ENCODE measurements at regions of chr17 and their contacts with region 1.

Region 1: DNA sequence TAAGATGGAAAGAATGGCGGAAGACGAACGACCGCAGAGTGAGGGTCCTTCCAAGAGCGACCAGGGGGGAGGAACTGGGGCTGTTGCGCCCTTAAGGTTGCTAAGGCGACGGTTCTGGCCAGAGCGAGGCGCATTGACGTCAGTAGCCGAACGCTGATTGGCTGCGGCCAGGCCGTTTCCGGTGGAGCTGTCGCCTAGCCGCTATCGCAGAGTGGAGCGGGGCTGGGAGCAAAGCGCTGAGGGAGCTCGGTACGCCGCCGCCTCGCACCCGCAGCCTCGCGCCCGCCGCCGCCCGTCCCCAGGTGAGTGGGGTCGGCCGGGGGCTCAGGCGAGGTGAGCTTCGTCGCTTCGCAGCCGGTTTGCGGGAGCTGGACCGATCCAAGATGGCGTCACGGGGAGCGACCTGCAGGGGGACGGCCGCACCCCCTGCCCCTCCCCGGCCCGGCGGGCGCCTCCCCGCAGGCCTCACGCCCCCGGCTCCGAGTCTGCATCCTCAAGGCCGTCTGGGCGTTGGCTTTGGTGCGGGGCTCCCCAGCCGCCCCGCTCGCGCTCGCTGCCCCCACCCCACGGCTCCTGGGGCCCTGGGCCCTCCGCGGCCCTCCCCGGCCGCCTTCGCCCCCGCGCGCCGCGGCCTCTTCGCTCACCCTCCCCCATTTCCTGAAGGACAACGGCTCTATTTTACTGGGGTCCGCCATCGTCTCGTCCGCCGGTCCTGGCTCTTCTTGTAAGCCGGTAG is at the start of gene PRKAR1A:
- DNase-seq: peak; percentile 97
- ATAC-seq: peak; percentile 89
- H3K4me3 Mint-ChIP-seq: peak within 1 kb of the TSS; percentile 98
- H3K27ac Mint-ChIP-seq: peak within 1 kb of the TSS; percentile 97
- H3K4me1 Mint-ChIP-seq: peaks cover 64% of the 10 kb centered on the region
- H3K27me3 Mint-ChIP-seq: no peaks in the 10 kb centered on the region
- total RNA-seq, gene PRKAR1A: 215 to 293 TPM

Region 2: DNA sequence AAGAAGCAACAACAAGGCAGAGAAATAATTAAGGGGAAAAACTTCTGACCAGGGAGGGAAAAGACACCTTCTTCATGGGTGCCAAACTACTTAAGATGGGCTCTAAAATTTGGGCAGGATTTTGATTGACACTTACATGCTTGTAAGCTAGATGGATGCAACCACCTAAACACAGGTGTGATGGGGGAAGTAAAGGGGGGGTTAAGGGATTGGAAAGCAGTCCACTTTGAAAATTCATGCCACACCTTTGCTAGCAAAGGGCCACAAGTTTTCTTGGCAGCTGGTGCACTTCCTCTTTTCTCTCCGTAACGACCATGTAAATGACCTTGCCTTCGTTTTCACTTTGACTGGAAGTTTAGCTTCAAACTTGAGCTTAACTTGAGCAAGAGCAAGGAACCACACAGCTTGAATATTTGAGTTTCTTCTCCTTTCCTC is 14.5 kb before region 1 on chr17:
- CTCF ChIA-PET with region 1: interaction called, 20 read pairs
- DNase-seq: peak; percentile 47
- ATAC-seq: peak; percentile 75
- H3K4me3 Mint-ChIP-seq: peak overlapping the region; percentile 15
- H3K27ac Mint-ChIP-seq: peak overlapping the region; percentile 91
- H3K4me1 Mint-ChIP-seq: peaks cover 39% of the 10 kb centered on the region
- H3K27me3 Mint-ChIP-seq: peaks cover 5% of the 10 kb centered on the region